Naive thymus-derived CD4-positive, alpha-beta T cell (primary cell): ENCODE measurements at regions of chr6 and their contacts with region 1.

Region 1: DNA sequence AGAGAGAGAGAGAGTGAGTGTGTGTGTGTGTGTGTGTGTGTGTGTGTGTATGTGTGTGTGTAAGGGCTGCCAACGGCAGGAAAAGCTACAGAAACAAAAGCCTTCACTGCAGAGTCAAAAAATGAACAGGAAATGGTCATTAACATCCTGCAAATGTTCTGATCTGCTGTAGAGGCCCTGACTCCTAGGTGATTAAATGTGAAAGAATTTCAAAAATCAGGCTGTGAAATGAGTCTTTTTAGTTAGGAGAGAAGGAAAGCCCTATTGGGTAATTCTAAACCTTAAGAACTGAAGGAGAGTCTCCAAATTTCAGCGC is 166.5 kb upstream of the MYLIP start:
- DNase-seq: peak in 2 of 9 donors; percentile 6 to 8
- ATAC-seq: no peak
- H3K4me3 ChIP-seq: no peak overlapping the region
- H3K4me3 Mint-ChIP-seq: peak overlapping the region in 1 of 10 donors; percentile 38
- H3K27ac ChIP-seq: no peak overlapping the region
- H3K27ac Mint-ChIP-seq: peak overlapping the region in 3 of 9 donors; percentile 5 to 61 (median 6)
- H3K4me1 ChIP-seq: peaks cover 0 to 3% of the 10 kb centered on the region in 2 donors
- H3K4me1 Mint-ChIP-seq: peaks cover 8 to 30% (median 17%) of the 10 kb centered on the region in 7 donors
- H3K27me3 ChIP-seq: no peaks in the 10 kb centered on the region
- H3K27me3 Mint-ChIP-seq: peaks cover 0 to 4% (median 0%) of the 10 kb centered on the region in 5 donors

Region 2: DNA sequence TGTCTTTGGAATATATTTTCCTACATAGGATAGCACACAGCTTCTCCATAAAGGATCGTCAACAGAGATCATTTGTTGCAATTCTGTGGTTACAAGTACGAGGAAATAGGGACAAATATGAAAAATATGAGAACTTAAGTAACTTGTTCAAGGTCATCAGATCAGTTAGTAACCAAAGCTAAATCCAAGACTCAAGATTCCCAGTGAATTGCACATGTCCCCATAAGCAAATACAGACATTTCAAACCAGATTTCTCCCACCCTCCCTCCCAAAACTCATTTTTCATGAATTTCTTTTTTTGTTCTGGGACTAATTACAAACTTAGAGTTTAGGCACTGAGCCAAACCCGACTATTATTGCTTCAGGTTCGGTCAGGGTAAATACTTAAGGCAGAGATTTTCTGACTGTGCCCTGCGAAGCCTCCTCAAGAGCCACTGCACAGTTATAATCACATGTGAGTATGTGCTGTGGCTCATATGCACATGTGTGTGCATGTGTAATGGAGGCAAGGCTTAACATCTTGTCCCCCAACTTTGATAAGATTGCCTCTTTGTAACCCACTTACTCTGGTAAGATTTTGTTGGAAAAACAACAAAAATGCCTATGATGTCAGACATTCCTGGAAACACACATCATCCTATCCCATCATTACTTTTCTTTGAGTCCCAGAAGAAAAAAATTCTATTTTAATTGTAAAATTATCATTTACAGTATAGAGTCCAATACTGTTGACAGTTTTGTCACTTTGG is 1628.7 kb before region 1 on chr6:
- CTCF ChIA-PET with region 1: no interaction called
- POLR2A ChIA-PET with region 1: no interaction called
- intact Hi-C with region 1: no loop called
- DNase-seq: no peak
- ATAC-seq: no peak
- H3K4me3 ChIP-seq: no peak overlapping the region
- H3K4me3 Mint-ChIP-seq: no peak overlapping the region
- H3K27ac ChIP-seq: no peak overlapping the region
- H3K27ac Mint-ChIP-seq: no peak overlapping the region
- H3K4me1 ChIP-seq: no peaks in the 10 kb centered on the region
- H3K4me1 Mint-ChIP-seq: peaks cover 0 to 5% (median 0%) of the 10 kb centered on the region in 7 donors
- H3K27me3 ChIP-seq: no peaks in the 10 kb centered on the region
- H3K27me3 Mint-ChIP-seq: peaks cover 0 to 4% (median 0%) of the 10 kb centered on the region in 5 donors

Region 3: DNA sequence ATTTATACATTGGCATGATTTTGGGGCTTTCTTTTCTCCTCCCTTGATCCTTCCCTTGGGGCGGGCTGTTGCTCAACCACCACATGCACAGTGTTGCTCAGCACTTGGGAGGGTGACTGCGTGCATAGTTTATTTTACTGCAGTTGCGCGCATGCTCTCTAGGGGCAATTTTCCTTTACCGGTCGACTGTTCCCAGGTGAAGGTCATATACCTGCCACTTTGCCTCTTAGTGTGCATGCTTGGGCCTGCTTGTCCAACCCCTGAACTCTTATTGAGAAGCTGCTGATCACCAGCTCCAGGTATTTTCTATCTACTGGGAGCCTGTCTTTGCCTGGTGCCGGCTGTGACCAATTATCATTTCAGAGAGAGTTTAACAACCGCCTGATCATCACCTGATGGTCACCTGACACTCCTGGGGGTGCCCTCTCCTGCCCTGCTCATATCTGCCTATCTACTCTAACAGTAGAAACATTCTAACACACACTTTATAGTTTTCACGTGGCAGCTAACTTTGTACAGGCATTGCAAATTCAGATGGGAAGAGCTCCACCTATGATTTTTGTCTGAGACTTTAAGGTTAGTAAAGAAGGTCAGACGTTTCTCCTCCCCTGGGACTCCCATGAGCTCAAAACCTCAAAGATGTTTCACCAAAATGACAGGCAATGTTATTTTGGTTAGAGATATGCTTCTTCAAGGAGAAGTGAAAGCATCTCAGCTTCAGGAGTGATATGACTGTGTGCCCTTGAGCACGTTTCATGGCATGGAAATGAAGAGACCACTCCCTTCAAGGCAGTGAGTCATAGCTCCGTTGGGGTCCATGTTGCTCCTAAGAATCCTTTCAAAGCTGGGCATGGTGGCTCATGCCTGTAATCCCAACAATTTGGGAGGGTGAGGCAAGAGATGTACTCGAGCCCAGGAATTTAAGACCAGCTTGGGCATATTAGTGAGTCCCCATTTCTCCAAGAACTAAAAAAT is 61.0 kb before region 1 on chr6:
- CTCF ChIA-PET with region 1: no interaction called
- POLR2A ChIA-PET with region 1: no interaction called
- intact Hi-C with region 1: loop called in 1 of 2 experiments (anchors 5 kb)
- DNase-seq: peak in 1 of 9 donors; percentile 34
- ATAC-seq: peak; percentile 80
- H3K4me3 ChIP-seq: no peak overlapping the region
- H3K4me3 Mint-ChIP-seq: peak overlapping the region in 1 of 10 donors; percentile 70
- H3K27ac ChIP-seq: no peak overlapping the region
- H3K27ac Mint-ChIP-seq: peak overlapping the region in 1 of 9 donors; percentile 92
- H3K4me1 ChIP-seq: no peaks in the 10 kb centered on the region
- H3K4me1 Mint-ChIP-seq: peaks cover 0 to 35% (median 0%) of the 10 kb centered on the region in 7 donors
- H3K27me3 ChIP-seq: no peaks in the 10 kb centered on the region
- H3K27me3 Mint-ChIP-seq: peaks cover 0 to 7% (median 0%) of the 10 kb centered on the region in 5 donors

Region 4: DNA sequence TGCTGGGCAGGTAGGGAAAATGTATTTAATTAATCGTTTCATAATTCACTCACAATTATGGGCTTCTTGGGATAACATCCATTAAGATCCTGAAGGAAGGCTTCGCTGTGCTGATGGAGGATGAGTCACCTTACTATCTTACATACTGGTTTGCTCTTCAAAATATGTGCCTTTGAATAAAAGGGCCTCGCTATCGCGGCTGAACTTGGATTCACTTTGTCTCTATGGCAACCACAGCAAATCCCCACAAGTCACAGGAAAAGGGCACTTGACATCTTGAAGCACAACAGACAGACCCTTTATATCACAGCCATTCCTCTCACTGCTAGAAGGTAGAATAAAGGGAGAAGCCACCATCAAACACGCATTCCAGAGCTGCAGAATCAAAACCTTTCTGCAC is 25.2 kb after region 1 on chr6:
- CTCF ChIA-PET with region 1: no interaction called
- POLR2A ChIA-PET with region 1: no interaction called
- intact Hi-C with region 1: no loop called
- DNase-seq: no peak
- ATAC-seq: no peak
- H3K4me3 ChIP-seq: no peak overlapping the region
- H3K4me3 Mint-ChIP-seq: no peak overlapping the region
- H3K27ac ChIP-seq: no peak overlapping the region
- H3K27ac Mint-ChIP-seq: no peak overlapping the region
- H3K4me1 ChIP-seq: no peaks in the 10 kb centered on the region
- H3K4me1 Mint-ChIP-seq: peaks cover 0 to 3% (median 0%) of the 10 kb centered on the region in 7 donors
- H3K27me3 ChIP-seq: no peaks in the 10 kb centered on the region
- H3K27me3 Mint-ChIP-seq: peaks cover 0 to 4% (median 4%) of the 10 kb centered on the region in 5 donors